ENCODE measurements at regions of chrX and their contacts with region 1.

Region 1: DNA sequence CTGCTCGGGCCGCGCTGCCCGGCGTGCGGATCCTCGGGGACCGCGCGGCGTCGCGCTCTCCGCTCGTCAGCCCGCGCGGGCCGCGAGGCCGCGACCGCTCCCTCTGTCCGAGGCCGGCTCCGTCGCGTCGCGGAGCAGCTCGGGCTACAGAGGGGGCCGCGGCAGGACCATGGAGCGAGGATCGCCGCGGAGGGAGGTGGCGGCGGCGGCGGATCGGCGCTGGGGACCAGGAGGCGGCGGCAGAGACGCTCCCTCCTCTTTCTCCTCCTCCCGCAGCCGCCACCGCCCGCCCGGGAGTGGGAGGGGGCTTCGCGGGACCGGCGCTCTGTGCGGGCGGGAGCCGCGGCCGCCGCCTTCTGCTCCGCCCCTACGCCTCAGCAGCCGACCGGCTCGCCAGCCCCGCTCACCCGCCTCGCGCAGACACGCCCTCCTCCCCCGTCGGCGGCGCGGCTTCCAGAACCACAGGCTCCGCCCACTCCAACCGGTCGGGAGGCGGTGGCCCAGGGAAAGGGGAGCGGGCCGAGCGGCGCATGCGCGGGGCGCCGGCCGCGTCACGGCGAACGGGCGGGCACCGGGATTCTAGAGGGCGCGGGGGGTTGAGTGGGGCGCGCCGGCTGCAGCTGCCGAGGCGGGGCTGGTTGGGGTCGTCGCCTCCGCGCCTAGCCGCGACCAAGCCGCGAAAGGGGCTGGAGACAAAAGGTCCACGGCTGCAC is at the start of gene CASK:
- DNase-seq: peak; percentile 97
- H3K4me3 Mint-ChIP-seq: peak within 1 kb of the TSS; percentile 88
- H3K27ac Mint-ChIP-seq: peak within 1 kb of the TSS; percentile 84
- H3K4me1 Mint-ChIP-seq: peaks cover 25% of the 10 kb centered on the region
- H3K27me3 Mint-ChIP-seq: peaks cover 2% of the 10 kb centered on the region
- total RNA-seq, gene CASK: 16.4 and 19.3 TPM in 2 replicates

Region 2: GRCh38 chrX:41561045-41561444 is 362.4 kb before region 1 on chrX:
- intact Hi-C with region 1: loop called (anchors 5 kb)
- DNase-seq: peak; percentile 78
- H3K4me3 Mint-ChIP-seq: peak overlapping the region; percentile 8
- H3K27ac Mint-ChIP-seq: peak overlapping the region; percentile 64
- H3K4me1 Mint-ChIP-seq: peaks cover 26% of the 10 kb centered on the region
- H3K27me3 Mint-ChIP-seq: no peaks in the 10 kb centered on the region

Region 3: GRCh38 chrX:41796577-41796976 is 126.8 kb before region 1 on chrX:
- intact Hi-C with region 1: loop called (anchors 5 kb)
- DNase-seq: no peak
- H3K4me3 Mint-ChIP-seq: no peak overlapping the region
- H3K27ac Mint-ChIP-seq: no peak overlapping the region
- H3K4me1 Mint-ChIP-seq: peaks cover 16% of the 10 kb centered on the region
- H3K27me3 Mint-ChIP-seq: no peaks in the 10 kb centered on the region

Region 4: GRCh38 chrX:41858161-41858775 is 65.1 kb before region 1 on chrX:
- intact Hi-C with region 1: no loop called
- DNase-seq: no peak
- H3K4me3 Mint-ChIP-seq: no peak overlapping the region
- H3K27ac Mint-ChIP-seq: no peak overlapping the region
- H3K4me1 Mint-ChIP-seq: peaks cover 6% of the 10 kb centered on the region
- H3K27me3 Mint-ChIP-seq: no peaks in the 10 kb centered on the region

Region 5: GRCh38 chrX:42093756-42094155 is 170.3 kb after region 1 on chrX:
- intact Hi-C with region 1: loop called (anchors 2 kb)
- DNase-seq: no peak
- H3K4me3 Mint-ChIP-seq: peak overlapping the region; percentile 6
- H3K27ac Mint-ChIP-seq: peak overlapping the region; percentile 20
- H3K4me1 Mint-ChIP-seq: peaks cover 13% of the 10 kb centered on the region
- H3K27me3 Mint-ChIP-seq: no peaks in the 10 kb centered on the region

Region 6: GRCh38 chrX:42128020-42128419 is 204.6 kb after region 1 on chrX:
- intact Hi-C with region 1: loop called (anchors 2 kb)
- DNase-seq: peak; percentile 73
- H3K4me3 Mint-ChIP-seq: peak overlapping the region; percentile 48
- H3K27ac Mint-ChIP-seq: peak overlapping the region; percentile 74
- H3K4me1 Mint-ChIP-seq: peaks cover 46% of the 10 kb centered on the region
- H3K27me3 Mint-ChIP-seq: no peaks in the 10 kb centered on the region

Measured in activated CD4-positive, alpha-beta T cell treated with anti-CD3 and anti-CD28 coated beads, Interleukin-2, amount 10 ng/mL, durations not matched to agents 24 days and 14 days (primary cell).